Endothelial cell of umbilical vein (primary cell): ENCODE measurements at regions of chr19 and their contacts with region 1.

Region 1: DNA sequence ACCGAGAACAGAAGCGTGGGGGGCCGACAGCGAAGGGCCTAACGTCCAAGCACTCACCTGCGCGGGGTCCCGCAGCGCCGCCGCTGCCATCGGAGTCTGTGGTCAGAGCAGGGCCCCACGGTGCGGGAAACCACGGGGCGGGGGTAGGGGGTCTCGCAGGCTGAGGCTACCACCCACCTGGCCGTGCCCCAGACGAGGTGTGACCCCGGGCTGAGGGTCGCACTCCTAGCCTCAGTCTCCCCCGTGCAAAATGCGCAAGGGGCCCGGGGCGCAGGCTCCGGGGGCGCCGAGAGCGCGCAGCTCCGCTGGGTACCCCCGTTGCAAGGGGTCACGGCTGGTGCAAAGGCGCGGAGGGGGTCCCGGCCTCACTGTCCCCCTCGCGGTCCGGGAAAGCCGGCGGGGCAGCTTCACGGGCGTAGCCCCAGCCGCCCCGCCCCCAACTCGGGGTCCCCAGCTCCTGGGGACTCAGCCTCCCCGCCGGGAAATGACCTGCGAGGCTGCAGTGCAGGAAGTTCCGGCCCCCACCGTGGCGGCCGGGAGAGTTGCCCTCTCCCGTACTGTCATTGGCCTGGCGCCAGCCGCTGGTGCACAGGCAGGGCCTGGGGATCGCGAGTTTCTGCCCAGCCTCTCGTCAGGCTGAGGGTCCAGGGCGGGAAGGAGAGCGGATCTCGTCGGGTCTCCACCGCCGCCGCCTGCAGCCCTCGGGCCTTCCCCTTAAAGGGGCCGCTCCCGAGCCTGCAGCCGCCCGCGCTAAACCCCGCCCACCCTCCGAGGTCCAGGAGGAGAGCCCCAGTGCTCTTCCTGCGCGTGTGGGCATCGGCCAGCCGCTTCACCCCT is at the start of gene ZNF792:
- DNase-seq: peak; percentile 79
- H3K4me3 ChIP-seq: peak within 1 kb of the TSS; percentile 58 to 85 (median 80)
- H3K27ac ChIP-seq: peak within 1 kb of the TSS; percentile 94
- H3K4me1 ChIP-seq: peaks cover 13% of the 10 kb centered on the region
- H3K27me3 ChIP-seq: no peaks in the 10 kb centered on the region
- CTCF ChIP-seq: no peak
- POLR2A ChIP-seq: peak; percentile 42
- total RNA-seq, gene ZNF792: 19.6 and 19.8 TPM in 2 replicates

Region 2: DNA sequence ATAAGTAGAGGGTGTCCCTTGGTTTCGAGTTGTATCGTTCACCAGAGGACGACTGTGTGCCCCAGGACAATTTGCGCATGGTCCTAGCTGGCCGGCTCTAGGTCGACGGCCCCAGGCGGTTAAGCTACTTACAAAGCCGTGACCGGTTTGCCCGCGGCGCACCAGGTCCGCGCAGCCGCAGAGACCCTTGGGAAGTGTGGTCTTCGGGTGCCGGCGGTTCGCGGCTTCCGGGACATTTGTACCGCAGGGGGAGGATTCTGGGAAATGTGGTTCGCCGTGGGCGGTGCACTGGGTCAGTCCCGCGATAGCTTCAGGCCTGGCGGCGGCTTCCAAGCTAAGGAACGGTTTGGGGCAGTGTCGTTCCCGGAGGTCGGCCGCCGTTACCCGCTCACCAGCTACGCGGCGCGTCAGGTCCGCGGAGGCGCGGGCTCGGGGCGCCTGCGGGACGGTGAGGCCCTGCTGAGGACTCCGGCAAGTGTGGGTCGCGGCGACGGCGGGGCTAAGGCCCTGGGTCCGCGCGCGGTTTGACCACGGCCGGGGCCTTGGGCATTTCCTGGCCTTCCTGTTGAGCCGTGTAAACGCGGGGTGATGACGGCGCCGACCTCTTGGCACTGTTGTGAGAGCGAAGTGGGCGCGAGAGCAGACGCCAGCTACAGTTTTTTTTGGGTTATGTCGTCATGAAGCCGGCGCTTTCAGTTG is 286.3 kb before region 1 on chr19 and contains the start of gene ZNF302:
- CTCF ChIA-PET with region 1: no interaction called
- POLR2A ChIA-PET with region 1: no interaction called
- dilution Hi-C with region 1: no loop called
- intact Hi-C with region 1: loop called (anchors 1 kb)
- DNase-seq: peak; percentile 99
- H3K4me3 ChIP-seq: peak within 1 kb of the TSS; percentile 57 to 72 (median 72)
- H3K27ac ChIP-seq: peak within 1 kb of the TSS; percentile 97
- H3K4me1 ChIP-seq: peaks cover 10% of the 10 kb centered on the region
- H3K27me3 ChIP-seq: peaks cover 0 to 2% of the 10 kb centered on the region in 2 experiments
- CTCF ChIP-seq: no peak
- POLR2A ChIP-seq: peak; percentile 79
- total RNA-seq, gene ZNF302: 13.2 and 15.6 TPM in 2 replicates

Region 3: DNA sequence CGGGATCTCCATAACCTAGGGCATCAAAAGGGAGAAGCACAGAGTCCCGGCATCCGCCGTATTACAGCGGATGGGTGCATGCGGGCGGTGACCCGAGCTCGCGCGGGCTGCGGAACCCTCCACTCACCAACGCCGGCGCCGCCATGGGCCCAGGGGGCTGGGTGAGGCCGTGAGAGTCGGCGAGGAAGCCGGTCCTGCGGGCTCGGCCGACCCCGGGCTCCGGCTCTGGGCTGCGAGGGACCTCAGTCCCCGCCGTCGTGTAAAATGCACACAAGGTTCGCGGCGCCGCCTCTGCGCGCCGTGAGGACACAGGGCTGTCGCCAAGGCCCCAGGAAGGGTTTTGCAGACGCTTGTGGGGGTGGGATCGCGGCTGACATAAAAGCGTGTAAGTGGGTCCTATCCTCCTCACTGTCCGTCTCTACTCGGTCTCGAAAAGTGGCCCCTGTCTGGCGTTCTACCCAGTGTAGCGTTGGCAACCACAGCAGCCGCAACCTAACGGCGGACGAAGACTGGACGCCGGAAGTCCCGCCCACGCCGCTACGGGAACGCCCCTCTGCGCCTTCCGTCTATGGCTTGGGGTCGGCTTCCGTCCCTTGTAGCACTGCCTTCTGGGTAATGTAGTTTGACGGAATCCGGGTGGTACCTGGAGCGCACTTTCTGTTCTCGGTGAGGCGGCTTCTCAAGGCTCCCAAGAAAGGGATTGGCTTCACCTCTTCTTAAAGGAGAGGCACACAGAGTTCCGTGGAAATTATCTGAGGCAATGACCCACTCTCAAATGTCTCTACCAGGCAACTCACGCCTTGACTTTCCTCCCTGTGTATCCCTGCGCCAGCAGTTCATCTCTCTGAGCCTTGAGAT is 190.9 kb before region 1 on chr19 and contains the start of gene ZNF599:
- CTCF ChIA-PET with region 1: no interaction called
- POLR2A ChIA-PET with region 1: no interaction called
- dilution Hi-C with region 1: no loop called
- intact Hi-C with region 1: loop called (anchors 5 kb)
- DNase-seq: peak; percentile 91
- H3K4me3 ChIP-seq: peak within 1 kb of the TSS; percentile 64 to 67 (median 66)
- H3K27ac ChIP-seq: peak within 1 kb of the TSS; percentile 2
- H3K4me1 ChIP-seq: peaks cover 7% of the 10 kb centered on the region
- H3K27me3 ChIP-seq: no peaks in the 10 kb centered on the region
- CTCF ChIP-seq: no peak
- POLR2A ChIP-seq: peak; percentile 71
- total RNA-seq, gene ZNF599: 4.5 and 5.0 TPM in 2 replicates

Region 4: DNA sequence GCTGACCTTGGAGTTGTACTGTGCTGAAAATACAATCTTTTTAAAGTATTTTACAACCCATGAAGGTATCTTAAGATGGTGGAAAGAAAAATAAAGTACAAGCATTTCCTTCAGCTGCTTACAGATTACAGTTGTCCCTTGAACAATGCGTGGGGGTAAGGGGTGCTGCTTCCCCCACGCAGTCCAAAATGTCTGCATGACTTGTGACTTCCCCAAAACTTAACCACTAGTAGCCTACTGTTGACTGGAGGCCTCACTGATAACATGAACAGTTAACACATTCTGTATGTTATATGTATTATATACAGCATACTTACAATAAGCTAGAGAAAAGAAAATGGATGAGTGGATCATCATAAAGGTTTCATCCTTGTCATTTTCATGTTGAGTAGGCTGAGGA is 145.5 kb before region 1 on chr19:
- CTCF ChIA-PET with region 1: no interaction called
- POLR2A ChIA-PET with region 1: no interaction called
- dilution Hi-C with region 1: no loop called
- intact Hi-C with region 1: no loop called
- DNase-seq: no peak
- H3K4me3 ChIP-seq: no peak overlapping the region
- H3K27ac ChIP-seq: no peak overlapping the region
- H3K4me1 ChIP-seq: no peaks in the 10 kb centered on the region
- H3K27me3 ChIP-seq: peaks cover 0 to 2% of the 10 kb centered on the region in 2 experiments
- CTCF ChIP-seq: no peak
- POLR2A ChIP-seq: no peak

Region 5: DNA sequence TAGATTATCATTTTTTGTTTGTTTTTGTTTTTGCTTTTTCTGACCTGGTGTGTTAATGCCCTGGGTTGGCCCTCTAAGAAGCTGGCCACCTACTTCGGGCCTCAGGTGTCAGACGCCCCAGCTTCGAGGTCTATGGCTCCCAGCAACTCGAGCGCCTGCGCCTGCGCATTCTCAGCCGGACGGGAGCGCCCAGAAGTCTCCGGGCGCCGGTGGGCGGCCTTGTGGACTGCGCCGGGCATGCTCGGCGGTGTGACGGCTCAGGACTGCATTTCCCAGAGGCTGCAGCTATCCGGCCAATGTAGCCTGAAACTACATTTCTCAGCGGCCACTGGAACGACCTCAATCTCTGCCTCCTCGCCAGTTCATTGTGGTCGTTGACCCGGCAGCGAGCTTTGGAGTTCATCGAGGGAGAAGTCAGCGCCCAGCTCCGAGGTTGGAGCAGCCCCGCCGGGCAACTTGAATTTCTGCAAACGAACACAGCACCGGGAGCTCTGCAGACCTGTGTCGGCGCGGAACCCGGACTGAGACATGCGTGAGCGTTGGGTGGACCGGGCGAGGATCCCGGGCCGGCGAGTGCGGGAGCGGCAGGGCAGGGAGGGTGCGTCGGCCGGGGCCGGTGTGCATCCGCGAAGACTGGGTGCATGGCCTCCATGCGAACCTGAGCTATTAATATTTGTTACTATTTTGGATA is 37.0 kb before region 1 on chr19 and contains the start of gene ZNF30:
- CTCF ChIA-PET with region 1: interaction called, 11 read pairs
- POLR2A ChIA-PET with region 1: interaction called, 5 read pairs
- dilution Hi-C with region 1: no loop called
- intact Hi-C with region 1: loop called (anchors 2 kb)
- DNase-seq: peak; percentile 92
- H3K4me3 ChIP-seq: peak within 1 kb of the TSS; percentile 39 to 82 (median 50)
- H3K27ac ChIP-seq: no peak within 1 kb of the TSS
- H3K4me1 ChIP-seq: peaks cover 9% of the 10 kb centered on the region
- H3K27me3 ChIP-seq: peaks cover 2 to 5% of the 10 kb centered on the region in 2 experiments
- CTCF ChIP-seq: no peak
- POLR2A ChIP-seq: peak; percentile 71
- total RNA-seq, gene ZNF30: 3.6 and 4.7 TPM in 2 replicates

Region 6: DNA sequence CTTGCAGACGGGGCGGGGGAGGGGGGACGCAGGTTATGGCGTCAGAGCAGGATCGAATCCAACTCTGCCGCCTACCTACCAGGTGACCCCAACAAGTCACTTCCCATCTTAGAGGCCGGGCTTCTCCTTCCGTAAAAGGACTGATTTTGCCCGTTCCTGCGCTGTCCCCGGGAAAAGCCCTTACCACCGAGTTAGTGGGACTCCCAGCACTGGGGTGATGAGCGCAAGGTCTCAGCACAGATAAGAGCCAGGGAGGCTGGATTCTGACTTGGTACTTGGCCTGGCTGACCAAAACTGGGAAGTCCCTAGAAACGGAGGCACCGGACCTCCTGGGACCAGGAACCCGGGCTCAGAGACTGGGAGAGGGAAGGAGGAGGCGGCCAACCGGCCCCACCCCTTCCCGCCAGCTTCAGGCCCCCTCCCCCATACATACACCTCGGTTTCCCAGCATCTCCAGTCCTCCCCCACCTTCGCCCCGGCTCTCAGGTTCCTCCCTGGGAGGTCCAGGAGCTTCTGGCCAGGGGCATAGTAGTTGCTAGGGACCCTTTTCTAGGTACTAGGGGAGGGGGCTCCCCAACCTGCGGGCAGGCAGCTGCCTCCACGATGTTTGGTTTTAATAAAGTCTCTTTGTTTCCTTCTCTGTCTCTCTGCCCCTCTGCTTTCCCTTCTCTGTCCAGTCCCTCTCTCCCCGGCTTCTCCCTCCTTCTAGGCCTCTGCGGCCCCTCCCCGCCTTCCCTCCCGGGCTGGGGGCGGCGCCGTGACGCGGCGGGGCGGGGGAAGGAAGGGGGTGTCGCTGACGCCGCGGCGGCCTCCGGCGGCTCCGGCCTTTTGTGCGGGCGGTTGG is 35.9 kb after region 1 on chr19 and contains the start of gene GRAMD1A:
- CTCF ChIA-PET with region 1: interaction called, 3 read pairs
- POLR2A ChIA-PET with region 1: no interaction called
- dilution Hi-C with region 1: no loop called
- intact Hi-C with region 1: loop called (anchors 1 kb)
- DNase-seq: peak; percentile 87
- H3K4me3 ChIP-seq: peak within 1 kb of the TSS; percentile 75 to 91 (median 83)
- H3K27ac ChIP-seq: peak within 1 kb of the TSS; percentile 89
- H3K4me1 ChIP-seq: peaks cover 66% of the 10 kb centered on the region
- H3K27me3 ChIP-seq: no peaks in the 10 kb centered on the region
- CTCF ChIP-seq: no peak
- POLR2A ChIP-seq: peak; percentile 84
- total RNA-seq, gene GRAMD1A: 130 and 139 TPM in 2 replicates